ENCODE measurements at regions of chr1 and their contacts with region 1.

Region 1: DNA sequence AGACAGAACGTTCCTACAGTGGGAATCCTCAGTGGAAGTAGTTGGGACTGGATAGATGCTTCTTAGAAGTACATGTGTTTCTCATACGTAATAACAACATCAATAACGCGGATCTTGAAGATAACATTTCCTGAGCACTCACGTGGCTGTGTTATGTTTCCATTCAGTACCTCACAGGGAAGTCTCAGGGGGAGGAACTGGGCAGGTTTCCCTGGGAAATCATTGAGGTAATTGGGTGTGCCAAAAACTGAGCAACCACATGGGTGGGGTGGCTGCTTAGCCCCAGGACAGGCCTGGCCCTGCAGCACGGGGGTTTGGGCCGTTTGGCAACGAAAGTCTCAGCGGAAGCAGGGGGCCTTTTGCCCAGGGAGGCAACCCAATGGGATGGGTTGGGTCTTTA is 133.8 kb downstream of the ZSCAN20 start:
- DNase-seq: peak in 1 of 2 donors; percentile 26
- ATAC-seq: peak in 1 of 4 donors; percentile 43
- H3K4me3 ChIP-seq: no peak overlapping the region
- H3K27ac ChIP-seq: no peak overlapping the region
- H3K4me1 ChIP-seq: no peaks in the 10 kb centered on the region
- H3K27me3 ChIP-seq: no peaks in the 10 kb centered on the region
- CTCF ChIP-seq: no peak

Region 2: GRCh38 chr1:33094971-33095604 is 511.2 kb before region 1 on chr1:
- intact Hi-C with region 1: loop called in 1 of 2 experiments (anchors 5 kb)
- DNase-seq: no peak
- ATAC-seq: peak in 2 of 4 donors; percentile 42 to 77
- H3K4me3 ChIP-seq: no peak overlapping the region
- H3K27ac ChIP-seq: no peak overlapping the region
- H3K4me1 ChIP-seq: peaks cover 4% of the 10 kb centered on the region
- H3K27me3 ChIP-seq: no peaks in the 10 kb centered on the region
- CTCF ChIP-seq: peak; percentile 97

Region 3: DNA sequence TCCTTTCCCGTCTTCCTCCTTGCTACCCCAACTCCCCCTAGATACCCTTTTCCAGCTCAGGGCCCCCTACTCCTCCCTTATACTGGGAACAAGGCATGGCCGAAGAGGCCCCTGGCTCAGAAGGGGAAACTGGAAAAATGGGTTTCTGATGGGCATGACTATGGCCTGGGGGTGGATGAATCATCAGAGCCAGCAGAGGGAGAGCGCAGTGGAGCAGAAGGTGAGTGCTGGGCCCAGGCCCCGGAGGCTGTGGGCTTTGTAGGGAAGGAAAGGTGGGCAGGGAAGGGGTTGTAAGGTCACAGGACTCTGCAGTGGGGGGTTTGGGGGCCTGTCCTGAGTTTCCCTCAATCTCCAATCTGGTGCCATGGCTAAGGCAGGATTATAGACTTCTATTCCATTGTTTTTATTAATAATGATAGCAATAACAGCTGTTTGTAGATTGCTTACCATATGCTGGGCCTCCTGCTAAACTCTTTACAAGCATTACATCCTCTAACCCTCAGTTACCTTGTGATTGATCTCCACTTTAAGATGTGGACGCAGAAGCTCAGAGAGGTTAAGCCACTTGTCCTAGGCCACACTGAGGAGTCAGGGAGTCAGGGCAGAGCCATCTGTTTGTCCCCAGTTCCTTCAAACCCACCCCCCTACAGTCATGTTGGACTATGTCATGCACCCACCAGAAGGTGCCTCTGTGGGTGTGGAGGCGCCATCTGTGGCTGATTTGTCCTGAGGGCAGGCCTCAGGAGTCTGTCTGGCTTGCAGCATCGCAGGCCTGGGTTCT is 386.2 kb before region 1 on chr1:
- intact Hi-C with region 1: loop called (anchors 5 to 10 kb)
- DNase-seq: no peak
- ATAC-seq: no peak
- H3K4me3 ChIP-seq: no peak overlapping the region
- H3K27ac ChIP-seq: no peak overlapping the region
- H3K4me1 ChIP-seq: no peaks in the 10 kb centered on the region
- H3K27me3 ChIP-seq: no peaks in the 10 kb centered on the region
- CTCF ChIP-seq: no peak

Region 4: DNA sequence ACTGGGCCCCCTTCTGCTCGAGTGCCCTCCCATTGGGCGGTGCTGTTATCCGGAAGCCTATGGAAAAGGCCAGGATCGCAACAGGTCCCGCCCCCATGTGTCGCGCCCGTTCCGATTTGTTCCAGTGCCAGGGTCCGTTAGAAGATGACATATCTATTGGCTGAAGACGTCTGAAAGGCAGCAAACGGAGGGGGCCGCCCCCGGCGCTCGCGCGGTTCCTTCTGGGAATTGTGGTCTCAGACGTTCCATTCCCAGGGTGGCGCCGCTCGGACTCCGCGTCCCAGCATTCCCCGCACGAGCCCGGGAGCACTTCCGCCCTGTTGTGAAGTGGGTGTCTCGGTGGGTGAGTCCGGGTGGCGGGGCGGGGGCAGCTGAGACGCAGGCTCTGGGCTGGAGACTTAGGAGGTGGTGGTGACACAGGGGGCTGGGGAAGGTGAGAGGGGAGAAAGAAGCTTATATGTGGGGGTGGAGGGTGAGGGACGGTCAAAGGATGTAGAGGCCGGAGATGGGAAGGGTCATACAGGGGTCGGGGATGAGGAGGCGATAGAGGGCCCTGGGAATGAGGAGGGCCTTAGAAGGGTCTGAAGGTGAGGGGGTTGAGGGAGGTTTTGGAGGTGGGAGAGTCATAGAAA is 133.8 kb before region 1 on chr1 and contains the start of gene ZSCAN20:
- intact Hi-C with region 1: loop called (anchors 5 to 10 kb)
- DNase-seq: peak; percentile 98 to 99
- ATAC-seq: peak; percentile 94 to 95 (median 95)
- H3K4me3 ChIP-seq: peak within 1 kb of the TSS; percentile 67
- H3K27ac ChIP-seq: peak within 1 kb of the TSS; percentile 73
- H3K4me1 ChIP-seq: peaks cover 20% of the 10 kb centered on the region
- H3K27me3 ChIP-seq: no peaks in the 10 kb centered on the region
- CTCF ChIP-seq: no peak
- total RNA-seq, gene ZSCAN20: 2.0 to 4.9 (median 3.3) TPM

Region 5: DNA sequence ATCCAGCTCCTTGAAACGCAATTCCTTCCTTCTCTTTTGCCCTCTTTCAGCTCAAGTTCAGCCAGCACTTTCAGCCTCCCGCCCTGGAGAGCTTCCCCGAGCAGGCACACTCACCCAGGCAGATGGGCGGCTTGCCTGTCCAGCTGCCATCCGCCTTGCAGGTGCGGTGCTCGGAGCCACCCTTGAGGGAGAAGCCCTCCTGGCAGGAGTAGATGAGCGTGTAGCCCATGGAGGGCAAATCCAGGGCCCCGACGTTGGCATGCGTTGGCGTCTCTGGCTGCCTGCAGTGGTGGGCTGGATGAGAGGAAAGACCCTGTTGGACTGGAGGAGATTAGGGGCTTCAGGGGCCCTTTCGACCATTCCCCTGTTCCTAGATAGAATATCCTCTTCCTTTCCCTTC is 73.3 kb before region 1 on chr1:
- intact Hi-C with region 1: no loop called
- DNase-seq: no peak
- ATAC-seq: no peak
- H3K4me3 ChIP-seq: no peak overlapping the region
- H3K27ac ChIP-seq: no peak overlapping the region
- H3K4me1 ChIP-seq: no peaks in the 10 kb centered on the region
- H3K27me3 ChIP-seq: peaks cover 0 to 2% (median 0%) of the 10 kb centered on the region in 3 donors
- CTCF ChIP-seq: no peak

Region 6: GRCh38 chr1:33548319-33548718 is 58.0 kb before region 1 on chr1:
- intact Hi-C with region 1: no loop called
- DNase-seq: no peak
- ATAC-seq: no peak
- H3K4me3 ChIP-seq: no peak overlapping the region
- H3K27ac ChIP-seq: no peak overlapping the region
- H3K4me1 ChIP-seq: no peaks in the 10 kb centered on the region
- H3K27me3 ChIP-seq: no peaks in the 10 kb centered on the region
- CTCF ChIP-seq: no peak

Region 7: DNA sequence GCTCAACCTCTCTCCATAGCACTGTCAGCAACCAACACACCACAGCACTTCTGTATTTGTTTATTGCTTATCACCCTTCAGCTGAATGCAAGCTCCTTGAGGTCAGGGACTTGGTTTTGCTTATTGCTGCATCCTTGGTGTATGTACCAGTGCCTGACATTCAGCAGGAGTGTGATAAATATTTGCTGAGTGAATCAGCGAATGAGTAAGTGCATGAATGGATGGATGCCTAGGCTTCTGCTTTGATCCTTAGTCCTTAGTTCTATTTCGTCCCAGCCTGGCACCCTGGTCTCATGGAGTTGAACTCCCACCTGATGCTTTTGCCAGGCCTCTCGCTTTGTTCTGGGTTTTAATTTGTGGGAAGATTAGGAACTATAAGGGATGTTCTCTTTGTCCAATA is 45.6 kb before region 1 on chr1:
- intact Hi-C with region 1: loop called in 1 of 2 experiments (anchors 5 kb)
- DNase-seq: no peak
- ATAC-seq: no peak
- H3K4me3 ChIP-seq: no peak overlapping the region
- H3K27ac ChIP-seq: no peak overlapping the region
- H3K4me1 ChIP-seq: no peaks in the 10 kb centered on the region
- H3K27me3 ChIP-seq: peaks cover 0 to 2% (median 0%) of the 10 kb centered on the region in 3 donors
- CTCF ChIP-seq: no peak

Region 8: GRCh38 chr1:33654267-33654834 is 48.1 kb after region 1 on chr1:
- intact Hi-C with region 1: no loop called
- DNase-seq: no peak
- ATAC-seq: no peak
- H3K4me3 ChIP-seq: no peak overlapping the region
- H3K27ac ChIP-seq: no peak overlapping the region
- H3K4me1 ChIP-seq: no peaks in the 10 kb centered on the region
- H3K27me3 ChIP-seq: peaks cover 0 to 16% (median 0%) of the 10 kb centered on the region in 3 donors
- CTCF ChIP-seq: no peak